ENCODE measurements at regions of chr14 and their contacts with region 1.

Region 1: GRCh38 chr14:99604283-99604765 is 317 bp upstream of the CCDC85C start:
- DNase-seq: peak; percentile 99
- ATAC-seq: peak; percentile 91
- H3K4me3 Mint-ChIP-seq: peak overlapping the region; percentile 90
- H3K27ac Mint-ChIP-seq: peak overlapping the region; percentile 87
- H3K4me1 Mint-ChIP-seq: peaks cover 19% of the 10 kb centered on the region
- H3K27me3 Mint-ChIP-seq: peaks cover 7% of the 10 kb centered on the region

Region 2: GRCh38 chr14:99480917-99481744 is 123.2 kb before region 1 on chr14 and contains the start of gene CCNK:
- POLR2A ChIA-PET with region 1: interaction called, 13 read pairs
- DNase-seq: peak; percentile 99
- ATAC-seq: peak; percentile 89
- H3K4me3 Mint-ChIP-seq: peak within 1 kb of the TSS; percentile 97
- H3K27ac Mint-ChIP-seq: peak within 1 kb of the TSS; percentile 98
- H3K4me1 Mint-ChIP-seq: peaks cover 38% of the 10 kb centered on the region
- H3K27me3 Mint-ChIP-seq: no peaks in the 10 kb centered on the region
- total RNA-seq, gene CCNK: 88.4 to 90.4 TPM

Region 3: GRCh38 chr14:99659333-99659741 is 55.0 kb after region 1 on chr14:
- POLR2A ChIA-PET with region 1: no interaction called
- DNase-seq: no peak
- ATAC-seq: no peak
- H3K4me3 Mint-ChIP-seq: no peak overlapping the region
- H3K27ac Mint-ChIP-seq: no peak overlapping the region
- H3K4me1 Mint-ChIP-seq: peaks cover 2% of the 10 kb centered on the region
- H3K27me3 Mint-ChIP-seq: peaks cover 41% of the 10 kb centered on the region

Measured in activated naive CD8-positive, alpha-beta T cell treated with anti-CD3 and anti-CD28 coated beads, Interleukin-2, amount 10 ng/mL, durations not matched to agents 7 days and 5 days (primary cell).